ENCODE measurements at regions of chr1 and their contacts with region 1.

Region 1: DNA sequence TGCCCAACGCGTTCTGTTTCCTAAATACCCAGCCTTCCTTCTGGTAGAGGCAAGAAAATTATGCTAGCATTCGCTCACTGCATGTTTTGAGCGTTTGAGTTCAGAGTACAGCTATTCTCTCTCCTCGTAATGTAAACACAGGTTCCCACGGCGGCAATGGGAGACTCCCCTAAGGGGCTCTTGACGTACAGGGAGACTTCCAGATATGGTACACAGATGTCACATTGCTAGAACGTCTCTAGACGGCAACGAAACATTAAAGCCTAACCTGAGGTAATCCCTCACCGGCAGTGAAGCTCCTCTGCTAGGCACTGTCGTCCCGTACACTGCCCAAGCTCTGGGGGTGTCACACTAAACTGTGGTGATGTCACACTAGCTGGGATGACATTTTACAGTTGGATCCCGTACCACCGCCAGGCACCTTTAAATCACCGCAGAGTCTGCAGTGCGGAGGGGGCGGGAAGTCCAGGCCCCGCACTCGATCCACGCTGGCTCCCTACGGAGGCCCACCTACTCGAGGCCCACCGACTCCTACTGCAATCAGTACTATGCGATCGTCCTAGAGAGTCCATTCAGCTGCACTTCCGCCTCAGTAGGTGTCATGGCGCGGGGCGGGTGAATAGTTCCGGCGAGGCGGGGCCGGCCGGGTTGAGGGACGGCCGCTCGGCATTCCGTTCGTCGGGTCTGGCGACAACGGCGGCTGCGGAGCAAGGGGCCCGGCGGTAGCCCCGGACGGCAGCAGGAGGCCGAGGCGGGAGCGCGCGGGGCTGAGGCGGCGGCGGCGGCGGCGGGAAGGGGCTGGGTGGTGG is at the start of gene HIPK1:
- DNase-seq: peak; percentile 95
- H3K4me3 Mint-ChIP-seq: peak within 1 kb of the TSS; percentile 97
- H3K27ac Mint-ChIP-seq: peak within 1 kb of the TSS; percentile 98
- H3K4me1 Mint-ChIP-seq: peaks cover 53% of the 10 kb centered on the region
- H3K27me3 Mint-ChIP-seq: peaks cover 18% of the 10 kb centered on the region

Region 2: GRCh38 chr1:113630976-113631327 is 298.2 kb before region 1 on chr1:
- CTCF ChIA-PET with region 1: no interaction called
- DNase-seq: no peak
- H3K4me3 Mint-ChIP-seq: no peak overlapping the region
- H3K27ac Mint-ChIP-seq: no peak overlapping the region
- H3K4me1 Mint-ChIP-seq: no peaks in the 10 kb centered on the region
- H3K27me3 Mint-ChIP-seq: no peaks in the 10 kb centered on the region

Region 3: DNA sequence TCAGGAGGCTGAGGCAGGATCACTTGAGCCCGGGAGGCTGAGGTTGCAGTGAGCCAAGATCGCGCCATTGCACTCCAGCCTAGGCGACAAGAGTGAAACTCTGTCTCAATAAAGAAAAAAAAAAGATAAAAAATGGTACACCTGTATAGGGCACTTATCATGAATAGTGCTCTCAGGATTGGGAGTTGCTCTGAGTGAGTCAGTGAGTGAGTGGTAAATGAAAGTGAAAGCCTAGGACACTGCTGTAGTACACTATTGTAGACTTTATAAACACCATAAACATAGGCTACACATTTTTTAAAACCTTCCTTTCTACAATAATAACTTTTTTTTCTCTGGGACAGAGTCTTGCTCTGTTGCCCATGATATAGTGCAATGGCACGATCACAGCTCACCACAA is 186.6 kb before region 1 on chr1:
- CTCF ChIA-PET with region 1: no interaction called
- DNase-seq: peak; percentile 23
- H3K4me3 Mint-ChIP-seq: no peak overlapping the region
- H3K27ac Mint-ChIP-seq: peak overlapping the region; percentile 76
- H3K4me1 Mint-ChIP-seq: peaks cover 17% of the 10 kb centered on the region
- H3K27me3 Mint-ChIP-seq: no peaks in the 10 kb centered on the region

Region 4: DNA sequence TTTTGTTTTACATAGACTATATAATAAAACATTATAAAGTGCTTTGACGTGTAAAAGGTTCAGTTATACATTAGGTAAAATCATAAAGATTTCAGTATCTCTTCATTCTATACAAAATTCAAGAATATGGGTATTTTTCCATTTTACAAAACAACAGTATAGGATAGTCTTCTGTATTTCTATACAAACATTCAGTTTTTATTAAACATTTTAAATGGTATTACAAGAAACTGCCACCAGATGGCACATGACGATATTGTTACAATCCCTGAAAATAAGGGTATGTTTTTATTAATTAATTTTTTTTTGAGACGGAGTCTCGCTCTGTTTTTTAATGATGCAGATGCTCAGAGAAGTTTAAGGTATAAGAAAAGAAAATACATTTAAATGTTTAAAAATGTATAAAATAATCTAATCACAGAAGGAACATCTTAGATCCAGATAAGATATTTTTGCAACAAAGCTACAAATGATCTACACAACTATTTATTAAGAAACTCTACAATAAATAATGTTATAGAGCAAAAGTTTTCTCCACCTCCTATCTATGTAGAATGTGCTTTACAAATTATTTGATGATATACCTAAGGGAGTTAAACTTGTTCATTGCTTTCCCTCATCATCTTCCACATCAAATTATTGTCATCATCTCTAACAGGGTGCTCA is 93.4 kb before region 1 on chr1:
- CTCF ChIA-PET with region 1: interaction called, 18 read pairs
- DNase-seq: peak; percentile 33
- H3K4me3 Mint-ChIP-seq: no peak overlapping the region
- H3K27ac Mint-ChIP-seq: no peak overlapping the region
- H3K4me1 Mint-ChIP-seq: peaks cover 6% of the 10 kb centered on the region
- H3K27me3 Mint-ChIP-seq: no peaks in the 10 kb centered on the region

Region 5: DNA sequence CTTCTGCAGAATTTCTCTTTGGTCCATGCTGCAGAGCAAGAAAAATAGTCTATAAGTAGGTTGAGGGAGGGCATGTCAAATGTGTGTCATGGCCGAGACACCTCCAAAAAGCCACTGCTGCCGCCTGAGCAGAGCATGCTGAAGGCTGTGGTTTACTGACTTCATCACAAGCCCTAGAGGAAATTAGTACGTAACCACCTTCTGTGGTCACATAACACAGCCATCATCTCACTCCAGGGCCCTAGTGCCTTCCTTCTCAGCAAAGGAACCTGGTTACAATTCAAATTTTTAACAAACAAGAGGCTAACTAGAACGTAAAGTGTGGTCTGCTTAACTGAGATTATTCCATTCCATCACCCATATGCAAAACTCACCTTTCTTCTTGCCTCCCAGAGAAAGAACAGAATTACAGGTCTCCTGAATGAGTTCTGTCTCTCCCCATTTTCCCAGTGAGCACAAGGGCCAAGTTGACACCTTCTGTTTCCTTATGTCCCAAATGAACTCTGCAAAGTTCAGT is 57.5 kb before region 1 on chr1 and contains the start of gene PTPN22:
- CTCF ChIA-PET with region 1: interaction called, 18 read pairs
- DNase-seq: peak; percentile 88
- H3K4me3 Mint-ChIP-seq: peak within 1 kb of the TSS; percentile 87
- H3K27ac Mint-ChIP-seq: peak within 1 kb of the TSS; percentile 95
- H3K4me1 Mint-ChIP-seq: peaks cover 80% of the 10 kb centered on the region
- H3K27me3 Mint-ChIP-seq: no peaks in the 10 kb centered on the region

Region 6: GRCh38 chr1:113904674-113905434 is 24.3 kb before region 1 on chr1 and contains the starts of genes AP4B1 and DCLRE1B:
- CTCF ChIA-PET with region 1: interaction called, 29 read pairs
- DNase-seq: peak; percentile 99
- H3K4me3 Mint-ChIP-seq: peak within 1 kb of the TSS; percentile 86
- H3K27ac Mint-ChIP-seq: peak within 1 kb of the TSS; percentile 96
- H3K4me1 Mint-ChIP-seq: peaks cover 64% of the 10 kb centered on the region
- H3K27me3 Mint-ChIP-seq: no peaks in the 10 kb centered on the region

Region 7: DNA sequence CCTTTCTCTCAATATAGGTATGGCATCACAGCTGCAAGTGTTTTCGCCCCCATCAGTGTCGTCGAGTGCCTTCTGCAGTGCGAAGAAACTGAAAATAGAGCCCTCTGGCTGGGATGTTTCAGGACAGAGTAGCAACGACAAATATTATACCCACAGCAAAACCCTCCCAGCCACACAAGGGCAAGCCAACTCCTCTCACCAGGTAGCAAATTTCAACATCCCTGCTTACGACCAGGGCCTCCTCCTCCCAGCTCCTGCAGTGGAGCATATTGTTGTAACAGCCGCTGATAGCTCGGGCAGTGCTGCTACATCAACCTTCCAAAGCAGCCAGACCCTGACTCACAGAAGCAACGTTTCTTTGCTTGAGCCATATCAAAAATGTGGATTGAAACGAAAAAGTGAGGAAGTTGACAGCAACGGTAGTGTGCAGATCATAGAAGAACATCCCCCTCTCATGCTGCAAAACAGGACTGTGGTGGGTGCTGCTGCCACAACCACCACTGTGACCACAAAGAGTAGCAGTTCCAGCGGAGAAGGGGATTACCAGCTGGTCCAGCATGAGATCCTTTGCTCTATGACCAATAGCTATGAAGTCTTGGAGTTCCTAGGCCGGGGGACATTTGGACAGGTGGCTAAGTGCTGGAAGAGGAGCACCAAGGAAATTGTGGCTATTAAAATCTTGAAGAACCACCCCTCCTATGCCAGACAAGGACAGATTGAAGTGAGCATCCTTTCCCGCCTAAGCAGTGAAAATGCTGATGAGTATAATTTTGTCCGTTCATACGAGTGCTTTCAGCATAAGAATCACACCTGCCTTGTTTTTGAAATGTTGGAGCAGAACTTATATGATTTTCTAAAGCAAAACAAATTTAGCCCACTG is 11.5 kb after region 1 on chr1:
- CTCF ChIA-PET with region 1: interaction called, 29 read pairs
- DNase-seq: peak; percentile 56
- H3K4me3 Mint-ChIP-seq: peak overlapping the region; percentile 58
- H3K27ac Mint-ChIP-seq: peak overlapping the region; percentile 90
- H3K4me1 Mint-ChIP-seq: peaks cover 73% of the 10 kb centered on the region
- H3K27me3 Mint-ChIP-seq: no peaks in the 10 kb centered on the region

Region 8: DNA sequence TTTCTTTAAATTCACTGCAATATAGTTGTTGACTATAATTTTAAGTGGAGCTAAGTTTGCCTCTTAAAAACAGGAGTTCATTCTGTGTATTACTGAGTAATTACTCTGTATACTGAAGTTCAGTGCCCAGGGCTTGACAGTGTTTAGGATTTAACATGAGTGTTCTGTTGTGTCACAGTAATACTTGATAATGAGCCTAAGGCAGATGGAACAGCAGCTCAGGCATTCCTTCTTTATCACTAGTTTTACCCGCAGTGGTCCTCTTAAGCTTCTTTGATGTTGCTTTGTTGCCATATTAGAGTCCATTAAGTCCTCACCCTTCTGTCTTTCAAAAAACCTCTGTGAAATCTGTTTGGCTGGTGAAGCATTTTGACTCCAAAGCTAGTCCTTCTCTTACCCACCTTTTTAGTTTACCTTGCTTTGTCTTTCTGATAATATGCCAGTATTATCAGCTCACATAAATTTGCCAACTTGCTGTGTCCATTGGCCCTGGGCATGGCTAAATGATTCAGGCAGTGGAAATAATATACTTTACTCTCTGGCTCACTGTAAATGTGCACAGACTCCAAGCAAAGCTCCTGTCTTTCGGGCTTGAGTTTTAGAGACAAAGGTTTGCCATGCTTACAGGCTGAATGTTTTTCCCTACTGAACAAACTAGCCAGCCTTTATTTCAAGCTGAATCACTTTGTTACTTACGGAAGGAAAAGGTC is 17.7 kb after region 1 on chr1:
- CTCF ChIA-PET with region 1: interaction called, 29 read pairs
- DNase-seq: no peak
- H3K4me3 Mint-ChIP-seq: peak overlapping the region; percentile 56
- H3K27ac Mint-ChIP-seq: peak overlapping the region; percentile 95
- H3K4me1 Mint-ChIP-seq: peaks cover 62% of the 10 kb centered on the region
- H3K27me3 Mint-ChIP-seq: no peaks in the 10 kb centered on the region